Panc1 (cell line): ENCODE measurements at regions of chr13 and their contacts with region 1.

Region 1: DNA sequence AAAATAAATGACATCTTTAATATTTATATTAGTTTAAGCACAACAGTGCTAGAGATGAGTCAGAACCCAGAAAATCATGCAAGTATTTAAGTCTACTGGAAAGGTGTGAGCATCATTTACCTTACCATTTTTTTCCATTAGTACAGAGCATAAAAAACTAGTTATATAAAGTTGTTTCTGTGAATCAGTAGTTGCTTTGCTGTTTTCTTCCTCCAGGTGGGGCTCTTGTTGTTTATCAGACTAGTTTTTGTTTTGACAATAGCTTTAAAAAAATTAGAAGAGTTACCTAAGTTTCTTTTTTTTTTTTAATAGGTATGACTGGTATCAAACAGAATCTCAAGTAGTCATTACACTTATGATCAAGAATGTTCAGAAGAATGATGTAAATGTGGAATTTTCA is 12.7 kb downstream of the SUGT1 start:
- DNase-seq: no peak
- ATAC-seq: no peak
- H3K4me3 ChIP-seq: no peak overlapping the region
- H3K27ac ChIP-seq: no peak overlapping the region
- H3K4me1 ChIP-seq: no peaks in the 10 kb centered on the region
- H3K27me3 ChIP-seq: no peaks in the 10 kb centered on the region
- CTCF ChIP-seq: peak; percentile 57; the same call in 1 of the 2 replicates

Region 2: DNA sequence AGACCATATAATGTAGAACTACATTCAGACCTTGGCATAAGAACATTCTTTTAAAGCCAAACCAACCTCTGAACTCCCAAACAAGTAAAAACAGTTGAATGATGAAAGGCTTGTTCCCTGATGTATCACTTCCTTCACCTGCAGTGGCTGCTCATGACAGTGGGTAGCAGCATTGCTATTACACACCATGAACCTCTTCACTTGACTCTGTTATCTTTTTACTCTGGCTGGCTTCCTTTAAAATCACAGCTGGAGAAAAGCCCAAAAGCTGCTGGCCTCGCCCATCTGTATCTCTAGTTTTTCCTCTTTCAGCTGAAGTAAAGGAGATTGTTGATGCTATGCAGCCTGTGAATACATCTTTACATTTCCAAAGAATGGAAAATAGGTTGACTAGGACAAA is 282.0 kb before region 1 on chr13:
- CTCF ChIA-PET with region 1: no interaction called
- POLR2A ChIA-PET with region 1: no interaction called
- in situ Hi-C with region 1: no loop called
- intact Hi-C with region 1: no loop called
- DNase-seq: no peak
- ATAC-seq: no peak
- H3K4me3 ChIP-seq: no peak overlapping the region
- H3K27ac ChIP-seq: no peak overlapping the region
- H3K4me1 ChIP-seq: no peaks in the 10 kb centered on the region
- H3K27me3 ChIP-seq: no peaks in the 10 kb centered on the region
- CTCF ChIP-seq: no peak

Region 3: GRCh38 chr13:52968074-52968700 is 302.9 kb after region 1 on chr13:
- CTCF ChIA-PET with region 1: interaction called, 15 read pairs
- POLR2A ChIA-PET with region 1: no interaction called
- in situ Hi-C with region 1: no loop called
- intact Hi-C with region 1: no loop called
- DNase-seq: peak; percentile 51
- ATAC-seq: peak; percentile 93
- H3K4me3 ChIP-seq: no peak overlapping the region
- H3K27ac ChIP-seq: no peak overlapping the region
- H3K4me1 ChIP-seq: no peaks in the 10 kb centered on the region
- H3K27me3 ChIP-seq: no peaks in the 10 kb centered on the region; the same call in 1 of the 2 replicates
- CTCF ChIP-seq: peak; percentile 94